ENCODE measurements at regions of chr4 and their contacts with region 1.

Region 1: GRCh38 chr4:13849778-13850177 is 222.3 kb upstream of the BOD1L1 start:
- DNase-seq: no peak
- ATAC-seq: no peak
- H3K4me3 ChIP-seq: no peak overlapping the region
- H3K27ac ChIP-seq: no peak overlapping the region
- H3K4me1 ChIP-seq: peaks cover 0 to 5% (median 0%) of the 10 kb centered on the region in 9 donors
- H3K27me3 ChIP-seq: no peaks in the 10 kb centered on the region
- CTCF ChIP-seq: no peak

Region 2: DNA sequence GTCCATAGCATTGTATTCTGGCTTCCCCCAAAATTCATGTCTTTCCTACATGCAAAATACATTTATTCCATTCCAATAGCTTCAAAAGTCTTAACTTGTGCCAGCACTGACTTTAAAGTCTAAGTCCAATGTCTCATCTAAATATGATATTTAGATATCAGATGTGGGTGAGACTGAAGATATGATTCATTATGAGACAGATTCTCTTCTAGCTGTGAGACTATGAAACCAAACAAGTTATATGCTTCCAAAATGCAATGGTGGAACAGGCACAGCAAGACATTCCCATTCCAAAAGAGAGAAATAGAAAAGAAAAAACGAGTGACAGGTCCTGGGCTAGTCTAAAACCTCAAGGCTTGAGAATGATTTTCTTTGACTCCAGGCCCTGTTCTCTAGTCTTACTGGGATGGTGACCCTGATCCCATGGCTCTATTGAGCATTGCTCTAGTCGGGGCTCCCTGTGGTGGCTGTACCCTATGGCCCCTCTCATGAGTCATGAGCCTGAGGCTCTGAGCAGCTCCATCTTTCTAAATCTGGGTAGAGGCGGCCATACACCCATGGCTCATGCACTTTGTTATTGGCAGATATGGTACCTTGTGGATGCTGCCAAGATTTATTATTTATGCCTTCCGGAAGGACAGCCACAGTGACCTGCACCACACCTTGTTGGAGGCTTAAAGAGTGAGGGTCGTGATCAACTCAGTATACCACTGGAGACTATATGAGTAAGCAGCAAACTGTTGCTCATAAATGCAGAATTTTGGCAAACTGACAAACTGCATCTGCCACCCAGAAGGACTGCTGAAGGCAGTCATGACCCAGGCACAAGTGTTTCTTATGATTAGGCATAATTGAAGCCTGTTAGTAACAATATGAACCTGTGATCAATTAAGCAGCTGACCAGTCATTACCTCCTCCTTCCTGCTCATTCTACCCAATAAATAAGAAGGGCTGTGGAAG is 183.8 kb before region 1 on chr4:
- intact Hi-C with region 1: loop called in 1 of 10 experiments (anchors 10 kb)
- DNase-seq: no peak
- ATAC-seq: no peak
- H3K4me3 ChIP-seq: no peak overlapping the region
- H3K27ac ChIP-seq: no peak overlapping the region
- H3K4me1 ChIP-seq: peaks cover 0 to 4% (median 0%) of the 10 kb centered on the region in 9 donors
- H3K27me3 ChIP-seq: no peaks in the 10 kb centered on the region
- CTCF ChIP-seq: no peak